CD14-positive monocyte (primary cell): ENCODE measurements at regions of chr1 and their contacts with region 1.

Region 1: DNA sequence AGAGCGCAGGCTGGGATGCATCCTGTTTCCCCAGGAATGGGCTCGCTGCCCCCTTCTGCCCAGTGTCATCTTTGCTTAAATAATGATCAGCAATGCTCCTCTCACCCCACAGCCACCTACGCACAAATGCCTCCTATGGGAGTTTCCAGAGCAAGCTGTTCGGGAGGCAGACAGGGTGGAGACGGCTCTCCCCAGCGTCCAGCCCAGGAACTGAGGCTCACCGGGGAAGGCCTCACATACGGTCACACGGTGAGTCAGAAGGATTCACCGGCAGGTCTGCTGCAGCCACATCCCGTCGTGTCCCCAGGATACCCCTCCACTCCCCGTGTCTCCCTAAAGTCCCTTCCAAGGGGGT is 40.3 kb upstream of the RUNX3 start:
- DNase-seq: no peak
- H3K4me3 ChIP-seq: no peak overlapping the region
- H3K4me3 Mint-ChIP-seq: no peak overlapping the region
- H3K27ac ChIP-seq: no peak overlapping the region
- H3K27ac Mint-ChIP-seq: peak overlapping the region in 2 of 7 donors; percentile 19 to 83
- H3K4me1 ChIP-seq: peaks cover 29 to 33% of the 10 kb centered on the region in 2 donors
- H3K4me1 Mint-ChIP-seq: peaks cover 30% of the 10 kb centered on the region
- H3K27me3 ChIP-seq: no peaks in the 10 kb centered on the region
- H3K27me3 Mint-ChIP-seq: peaks cover 13 to 16% (median 14%) of the 10 kb centered on the region in 3 donors
- CTCF ChIP-seq: no peak

Region 2: DNA sequence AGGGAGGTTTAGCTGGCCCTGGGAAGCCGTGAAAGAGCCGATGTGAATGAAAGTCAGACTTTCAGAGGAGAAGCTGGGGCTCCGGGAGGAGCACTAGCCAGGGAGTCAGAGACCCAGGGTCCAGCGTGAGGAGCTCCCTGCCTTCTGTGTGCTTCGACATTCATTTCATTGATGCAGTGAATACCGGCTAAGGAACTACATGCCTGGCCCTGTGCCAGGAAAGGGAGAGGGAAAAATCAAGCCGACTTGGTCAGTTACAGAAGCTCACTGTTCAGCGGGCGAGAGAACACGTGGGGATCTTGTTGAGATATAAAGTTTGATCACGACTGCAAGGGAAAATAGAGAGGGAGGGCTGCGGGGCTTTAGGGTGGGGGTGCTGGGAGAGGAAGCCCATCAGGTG is 36.4 kb after region 1 on chr1:
- intact Hi-C with region 1: loop called in 1 of 2 experiments (anchors 5 kb)
- DNase-seq: peak; percentile 45 to 58 (median 50)
- H3K4me3 ChIP-seq: peak overlapping the region in 1 of 3 experiments; percentile 41
- H3K4me3 Mint-ChIP-seq: peak overlapping the region; percentile 59 to 86
- H3K27ac ChIP-seq: peak overlapping the region; percentile 60 to 76
- H3K27ac Mint-ChIP-seq: peak overlapping the region in 6 of 7 donors; percentile 6 to 94 (median 90)
- H3K4me1 ChIP-seq: peaks cover 47 to 54% of the 10 kb centered on the region in 2 donors
- H3K4me1 Mint-ChIP-seq: peaks cover 60% of the 10 kb centered on the region
- H3K27me3 ChIP-seq: no peaks in the 10 kb centered on the region
- H3K27me3 Mint-ChIP-seq: peaks cover 0 to 5% (median 4%) of the 10 kb centered on the region in 3 donors
- CTCF ChIP-seq: no peak

Region 3: GRCh38 chr1:25054526-25055323 is 84.3 kb after region 1 on chr1:
- intact Hi-C with region 1: no loop called
- DNase-seq: peak in 1 of 3 donors; percentile 50
- H3K4me3 ChIP-seq: no peak overlapping the region
- H3K4me3 Mint-ChIP-seq: no peak overlapping the region
- H3K27ac ChIP-seq: no peak overlapping the region
- H3K27ac Mint-ChIP-seq: no peak overlapping the region
- H3K4me1 ChIP-seq: peaks cover 0 to 4% of the 10 kb centered on the region in 2 donors
- H3K4me1 Mint-ChIP-seq: peaks cover 11% of the 10 kb centered on the region
- H3K27me3 ChIP-seq: no peaks in the 10 kb centered on the region
- H3K27me3 Mint-ChIP-seq: peaks cover 5 to 9% (median 6%) of the 10 kb centered on the region in 3 donors
- CTCF ChIP-seq: no peak

Region 4: DNA sequence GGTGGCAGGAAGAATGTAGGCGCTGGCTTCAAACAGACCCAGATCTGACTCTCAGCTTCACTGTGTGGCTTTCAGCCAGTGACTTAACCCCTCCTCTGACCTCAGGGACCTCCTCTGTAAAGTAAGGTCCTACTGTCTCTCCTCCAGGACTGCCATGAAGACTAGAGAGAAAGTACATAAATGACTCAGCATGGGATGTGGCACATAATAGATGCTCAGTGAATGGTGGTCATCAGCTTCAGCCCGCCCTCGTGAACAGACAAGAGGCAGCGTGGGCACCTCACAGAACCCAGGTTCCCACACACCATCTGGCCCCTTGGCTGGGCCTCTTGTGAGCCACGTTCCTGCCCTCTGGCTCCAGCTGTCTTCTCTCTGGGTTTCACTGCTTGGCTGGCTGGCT is 136.0 kb after region 1 on chr1:
- intact Hi-C with region 1: no loop called
- DNase-seq: no peak
- H3K4me3 ChIP-seq: no peak overlapping the region
- H3K4me3 Mint-ChIP-seq: no peak overlapping the region
- H3K27ac ChIP-seq: no peak overlapping the region
- H3K27ac Mint-ChIP-seq: no peak overlapping the region
- H3K4me1 ChIP-seq: peaks cover 44 to 45% of the 10 kb centered on the region in 2 donors
- H3K4me1 Mint-ChIP-seq: peaks cover 37% of the 10 kb centered on the region
- H3K27me3 ChIP-seq: no peaks in the 10 kb centered on the region
- H3K27me3 Mint-ChIP-seq: peaks cover 0 to 7% (median 4%) of the 10 kb centered on the region in 3 donors
- CTCF ChIP-seq: no peak

Region 5: GRCh38 chr1:25642574-25643108 is 672.3 kb after region 1 on chr1:
- intact Hi-C with region 1: no loop called
- DNase-seq: no peak
- H3K4me3 ChIP-seq: no peak overlapping the region
- H3K4me3 Mint-ChIP-seq: no peak overlapping the region
- H3K27ac ChIP-seq: no peak overlapping the region
- H3K27ac Mint-ChIP-seq: peak overlapping the region in 1 of 7 donors; percentile 75
- H3K4me1 ChIP-seq: peaks cover 8 to 10% of the 10 kb centered on the region in 2 donors
- H3K4me1 Mint-ChIP-seq: peaks cover 13% of the 10 kb centered on the region
- H3K27me3 ChIP-seq: no peaks in the 10 kb centered on the region
- H3K27me3 Mint-ChIP-seq: peaks cover 4 to 15% (median 7%) of the 10 kb centered on the region in 3 donors
- CTCF ChIP-seq: no peak